Cardiac septum (tissue), 1 donor: ENCODE measurements at regions of chr1 and their contacts with region 1.

Region 1: DNA sequence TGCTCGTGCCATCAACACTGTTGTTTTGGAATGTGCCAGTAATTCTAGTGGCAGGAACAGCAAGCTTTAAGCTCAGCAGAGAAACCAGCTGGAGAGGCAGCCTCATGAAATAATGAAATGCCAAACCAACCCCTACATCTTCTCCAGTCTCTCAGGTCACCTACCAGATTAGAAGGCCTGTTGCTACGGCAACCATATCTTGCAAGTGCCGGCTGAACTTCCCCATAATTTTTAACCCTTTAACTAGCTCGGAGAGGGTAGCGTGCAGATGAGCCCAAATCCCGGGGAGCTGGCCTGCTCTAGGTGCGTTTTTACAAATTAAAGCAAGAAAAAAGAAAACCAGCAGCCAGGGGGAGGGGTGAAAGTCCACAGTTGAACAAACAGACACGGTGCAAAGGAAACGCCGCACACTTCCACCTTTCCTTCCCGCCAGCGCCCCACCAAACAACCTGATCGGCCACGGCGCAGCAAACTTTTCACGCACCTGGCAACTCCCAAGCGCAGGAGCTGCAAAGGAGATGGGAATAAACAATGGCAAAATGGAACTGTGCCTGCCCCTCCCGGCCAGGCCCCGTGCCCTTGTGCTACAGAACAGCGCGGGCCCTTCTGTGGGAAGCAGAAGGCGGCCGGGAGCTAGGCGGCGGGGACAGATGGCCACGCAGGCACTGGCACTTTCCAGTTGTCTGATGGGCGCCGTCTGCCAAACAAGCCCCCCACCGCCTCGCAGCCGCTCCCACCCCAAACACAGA is 50.1 kb downstream of the SSBP3 start:
- DNase-seq: no peak

Region 2: DNA sequence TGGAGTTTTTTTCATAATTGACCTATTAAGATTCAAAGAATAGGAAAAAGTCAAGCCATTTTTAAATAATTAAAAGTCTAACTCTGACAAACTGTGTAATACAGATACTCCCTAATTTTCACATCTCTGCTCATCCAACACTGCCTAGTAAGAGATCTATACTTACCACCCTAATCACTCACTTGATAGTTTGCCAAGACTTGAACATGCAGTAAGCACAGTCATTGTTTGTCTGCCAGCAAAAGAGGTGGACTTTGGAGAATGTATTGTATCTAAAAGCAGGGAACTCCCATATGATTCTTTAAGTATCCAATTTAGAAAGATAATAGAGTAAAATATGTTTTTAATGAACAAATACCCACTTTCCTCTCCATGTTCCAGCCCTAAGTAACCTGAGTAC is 318.6 kb before region 1 on chr1:
- intact Hi-C with region 1: no loop called
- DNase-seq: no peak

Region 3: GRCh38 chr1:54273092-54273794 is 82.9 kb before region 1 on chr1:
- intact Hi-C with region 1: loop called (anchors 2 kb)
- DNase-seq: no peak

Region 4: GRCh38 chr1:54310439-54311328 is 45.4 kb before region 1 on chr1:
- intact Hi-C with region 1: loop called (anchors 5 kb)
- DNase-seq: peak; percentile 84

Region 5: DNA sequence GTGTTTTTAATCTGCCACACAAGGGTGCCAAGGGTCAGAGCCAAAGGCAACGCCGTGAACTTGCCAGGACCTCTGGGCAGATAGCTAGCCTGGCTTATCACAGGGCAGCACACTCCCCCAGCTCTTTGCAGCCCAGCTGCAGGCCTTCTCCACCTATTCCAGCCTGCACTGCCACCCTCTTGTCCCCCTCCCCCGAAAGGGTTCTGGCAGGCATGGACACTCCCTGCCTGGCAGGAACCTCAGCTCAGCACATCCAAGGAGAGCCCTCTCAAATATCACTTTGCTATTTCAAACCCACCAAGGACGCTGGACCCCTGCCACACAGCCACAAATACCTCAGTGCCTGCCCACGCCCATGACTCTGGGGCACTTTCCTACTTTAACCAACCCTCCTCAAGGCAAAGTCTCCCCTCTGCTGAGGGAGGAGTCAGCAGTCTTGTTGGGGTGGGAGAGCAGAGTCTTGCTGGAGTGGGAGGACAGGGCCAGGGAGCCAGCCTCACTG is 41.0 kb after region 1 on chr1:
- intact Hi-C with region 1: loop called (anchors 2 kb)
- DNase-seq: peak; percentile 89